ENCODE measurements at regions of chr2 and their contacts with region 1.

Region 1: GRCh38 chr2:48287976-48288375 is 242.0 kb upstream of the STON1 start:
- DNase-seq: no peak
- ATAC-seq: no peak
- H3K4me3 ChIP-seq: no peak overlapping the region
- H3K27ac ChIP-seq: no peak overlapping the region
- H3K4me1 ChIP-seq: no peaks in the 10 kb centered on the region
- H3K27me3 ChIP-seq: peaks cover 1% of the 10 kb centered on the region; the same call in 1 of the 2 replicates
- CTCF ChIP-seq: no peak
- POLR2A ChIP-seq: no peak
- RAD21 ChIP-seq: no peak

Region 2: DNA sequence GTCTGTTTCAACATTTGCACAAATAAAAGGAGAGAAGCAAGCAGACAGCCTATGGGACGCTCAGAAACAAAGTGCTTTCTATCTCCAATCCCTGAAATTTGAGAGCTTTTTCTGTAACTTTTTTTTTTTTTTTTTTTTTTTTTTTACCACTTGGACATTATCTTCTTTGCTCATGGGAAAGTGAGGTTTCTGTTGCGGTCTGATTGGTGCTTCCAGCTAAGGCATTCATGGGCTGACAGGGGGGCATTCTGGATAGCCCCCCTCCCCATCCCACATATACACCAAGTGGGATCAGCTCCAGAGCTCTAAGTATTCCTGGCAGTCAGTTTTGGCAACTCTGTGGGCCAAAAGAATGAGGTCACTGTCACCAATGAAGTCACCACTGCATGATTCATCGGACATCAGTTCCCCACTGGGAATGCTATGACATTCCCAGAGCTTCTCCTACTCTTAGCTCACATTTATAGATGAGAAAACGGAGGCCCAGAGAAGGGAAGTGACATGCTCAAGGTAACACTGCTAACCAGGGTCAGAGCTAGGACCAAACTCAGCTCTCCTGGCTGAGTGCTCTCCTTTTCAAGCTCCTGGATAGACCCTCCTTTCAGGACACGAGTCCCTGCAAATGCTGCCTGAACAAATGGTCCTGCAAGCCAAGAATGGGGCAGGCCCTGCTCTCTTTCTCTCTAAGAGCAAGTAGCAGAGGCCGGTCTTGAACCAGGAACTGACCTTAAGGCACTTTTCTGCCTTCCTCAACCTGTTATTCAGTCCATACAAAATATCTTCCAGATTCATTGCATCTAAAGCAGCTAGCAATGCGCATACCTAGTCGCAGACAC is 1747.3 kb before region 1 on chr2:
- CTCF ChIA-PET with region 1: no interaction called
- POLR2A ChIA-PET with region 1: interaction called, 11 read pairs
- dilution Hi-C with region 1: no loop called
- in situ Hi-C with region 1: no loop called
- intact Hi-C with region 1: no loop called
- DNase-seq: peak; percentile 86
- ATAC-seq: no peak
- H3K4me3 ChIP-seq: no peak overlapping the region
- H3K27ac ChIP-seq: peak overlapping the region; percentile 78; the same call in 1 of the 2 replicates
- H3K4me1 ChIP-seq: peaks cover 18% of the 10 kb centered on the region
- H3K27me3 ChIP-seq: no peaks in the 10 kb centered on the region
- CTCF ChIP-seq: no peak
- POLR2A ChIP-seq: no peak
- RAD21 ChIP-seq: no peak

Region 3: DNA sequence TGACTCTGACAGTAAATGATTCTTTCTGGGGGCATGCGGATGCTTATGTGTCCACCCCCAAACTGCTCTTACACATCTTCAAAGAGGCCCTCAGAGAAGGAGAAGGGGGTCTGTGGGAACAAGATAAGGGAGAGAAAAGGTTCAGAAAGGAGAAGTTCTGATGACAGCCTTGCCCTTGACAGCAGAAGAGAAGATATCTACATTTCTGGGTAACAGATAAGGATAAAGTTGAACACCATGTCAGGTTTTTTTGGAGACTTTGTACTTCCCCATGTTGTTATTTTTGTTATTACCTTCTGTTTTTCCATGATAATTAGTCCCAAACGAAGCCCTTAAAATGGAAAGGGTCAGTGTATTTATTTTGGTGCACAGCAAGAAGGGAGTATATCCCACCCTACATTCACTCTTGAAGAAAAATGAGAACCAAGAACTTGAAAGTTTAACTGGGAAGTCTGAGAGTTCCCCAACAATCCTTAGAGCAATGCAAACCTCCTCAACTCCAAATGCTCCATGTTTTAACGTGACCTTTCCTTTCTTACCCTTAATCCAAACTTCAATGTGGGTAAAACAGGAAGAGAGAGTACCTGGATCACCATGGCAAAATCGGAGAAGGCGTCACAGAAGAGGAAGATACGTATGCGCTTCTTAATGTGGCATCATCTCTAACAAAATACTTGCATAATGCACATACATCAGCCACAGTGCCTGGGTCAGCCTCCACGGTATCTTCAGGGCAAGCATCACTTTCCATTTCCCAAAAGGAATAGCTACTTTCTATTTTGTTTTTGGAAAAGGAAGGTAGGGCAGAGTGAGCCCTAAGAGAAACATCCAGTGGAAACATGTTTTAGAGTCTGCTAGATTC is 22.6 kb before region 1 on chr2:
- CTCF ChIA-PET with region 1: no interaction called
- POLR2A ChIA-PET with region 1: no interaction called
- dilution Hi-C with region 1: no loop called
- in situ Hi-C with region 1: no loop called
- intact Hi-C with region 1: no loop called
- DNase-seq: no peak
- ATAC-seq: no peak
- H3K4me3 ChIP-seq: no peak overlapping the region
- H3K27ac ChIP-seq: no peak overlapping the region
- H3K4me1 ChIP-seq: no peaks in the 10 kb centered on the region
- H3K27me3 ChIP-seq: peaks cover 2% of the 10 kb centered on the region
- CTCF ChIP-seq: no peak
- POLR2A ChIP-seq: no peak
- RAD21 ChIP-seq: no peak

Region 4: GRCh38 chr2:48306409-48307284 is 18.7 kb after region 1 on chr2:
- CTCF ChIA-PET with region 1: no interaction called
- POLR2A ChIA-PET with region 1: no interaction called
- dilution Hi-C with region 1: no loop called
- in situ Hi-C with region 1: no loop called
- intact Hi-C with region 1: no loop called
- DNase-seq: peak; percentile 26
- ATAC-seq: peak; percentile 35; the same call in 1 of the 2 replicates
- H3K4me3 ChIP-seq: no peak overlapping the region
- H3K27ac ChIP-seq: no peak overlapping the region
- H3K4me1 ChIP-seq: peaks cover 2% of the 10 kb centered on the region; the same call in 1 of the 2 replicates
- H3K27me3 ChIP-seq: peaks cover 2% of the 10 kb centered on the region; the same call in 1 of the 2 replicates
- CTCF ChIP-seq: no peak
- POLR2A ChIP-seq: no peak
- RAD21 ChIP-seq: no peak

Measured in IMR-90 (cell line).